PC-9 (cell line): ENCODE measurements at regions of chr22 and their contacts with region 1.

Region 1: GRCh38 chr22:22138915-22139314 is 105.7 kb upstream of the VPREB1 start:
- DNase-seq: no peak
- H3K4me3 ChIP-seq: no peak overlapping the region
- H3K27ac ChIP-seq: no peak overlapping the region
- H3K4me1 ChIP-seq: no peaks in the 10 kb centered on the region
- H3K27me3 ChIP-seq: peaks cover 34% of the 10 kb centered on the region
- CTCF ChIP-seq: no peak

Region 2: DNA sequence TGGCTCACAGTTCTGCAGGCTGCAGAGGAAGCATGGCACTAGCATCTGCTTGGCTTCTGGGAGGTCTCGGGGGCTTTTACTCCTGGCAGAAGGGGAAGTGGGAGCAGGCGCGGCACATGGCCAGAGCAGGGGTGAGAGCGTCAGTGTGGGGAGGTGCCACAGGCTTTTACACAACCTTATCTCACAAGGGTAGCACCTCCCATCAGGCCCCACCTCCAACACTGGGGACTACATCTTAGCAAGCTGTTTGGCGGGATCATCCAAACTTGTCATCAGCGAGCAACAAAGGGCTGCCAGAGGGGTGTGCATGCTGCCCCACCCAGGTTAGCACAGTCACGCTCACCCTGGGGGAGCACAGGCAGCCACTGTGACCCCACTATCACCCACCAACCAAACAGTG is 384.4 kb before region 1 on chr22:
- CTCF ChIA-PET with region 1: no interaction called
- POLR2A ChIA-PET with region 1: no interaction called
- intact Hi-C with region 1: no loop called
- DNase-seq: no peak
- H3K4me3 ChIP-seq: no peak overlapping the region
- H3K27ac ChIP-seq: no peak overlapping the region
- H3K4me1 ChIP-seq: no peaks in the 10 kb centered on the region; the same call in 1 of the 2 replicates
- H3K27me3 ChIP-seq: no peaks in the 10 kb centered on the region
- CTCF ChIP-seq: no peak

Region 3: GRCh38 chr22:22048981-22049531 is 89.9 kb before region 1 on chr22:
- CTCF ChIA-PET with region 1: interaction called, 10 read pairs
- POLR2A ChIA-PET with region 1: no interaction called
- intact Hi-C with region 1: no loop called
- DNase-seq: no peak
- H3K4me3 ChIP-seq: no peak overlapping the region
- H3K27ac ChIP-seq: no peak overlapping the region
- H3K4me1 ChIP-seq: no peaks in the 10 kb centered on the region
- H3K27me3 ChIP-seq: peaks cover 14% of the 10 kb centered on the region
- CTCF ChIP-seq: no peak